ENCODE measurements at regions of chr16 and their contacts with region 1.

Region 1: GRCh38 chr16:53054670-53055485 is at the start of gene CHD9:
- DNase-seq: peak; percentile 82 to 87
- H3K4me3 ChIP-seq: peak within 1 kb of the TSS; percentile 63 to 71
- H3K27ac ChIP-seq: peak within 1 kb of the TSS; percentile 70 to 81
- H3K4me1 ChIP-seq: no peaks in the 10 kb centered on the region
- H3K27me3 ChIP-seq: no peaks in the 10 kb centered on the region
- CTCF ChIP-seq: peak; percentile 97 to 100 (median 99)
- POLR2A ChIP-seq: peak in 1 of 2 donors; percentile 45
- total RNA-seq, gene CHD9: 46.9 to 174 (median 133) TPM

Region 2: GRCh38 chr16:53130159-53131049 is 75.5 kb after region 1 on chr16:
- intact Hi-C with region 1: loop called (anchors 10 kb)
- DNase-seq: peak; percentile 95 to 96
- H3K4me3 ChIP-seq: peak overlapping the region; percentile 80 to 97
- H3K27ac ChIP-seq: peak overlapping the region; percentile 91 to 97
- H3K4me1 ChIP-seq: peaks cover 0 to 12% of the 10 kb centered on the region in 2 donors
- H3K27me3 ChIP-seq: no peaks in the 10 kb centered on the region
- CTCF ChIP-seq: peak; percentile 32 to 96 (median 84)
- POLR2A ChIP-seq: peak in 1 of 2 donors; percentile 58

Region 3: DNA sequence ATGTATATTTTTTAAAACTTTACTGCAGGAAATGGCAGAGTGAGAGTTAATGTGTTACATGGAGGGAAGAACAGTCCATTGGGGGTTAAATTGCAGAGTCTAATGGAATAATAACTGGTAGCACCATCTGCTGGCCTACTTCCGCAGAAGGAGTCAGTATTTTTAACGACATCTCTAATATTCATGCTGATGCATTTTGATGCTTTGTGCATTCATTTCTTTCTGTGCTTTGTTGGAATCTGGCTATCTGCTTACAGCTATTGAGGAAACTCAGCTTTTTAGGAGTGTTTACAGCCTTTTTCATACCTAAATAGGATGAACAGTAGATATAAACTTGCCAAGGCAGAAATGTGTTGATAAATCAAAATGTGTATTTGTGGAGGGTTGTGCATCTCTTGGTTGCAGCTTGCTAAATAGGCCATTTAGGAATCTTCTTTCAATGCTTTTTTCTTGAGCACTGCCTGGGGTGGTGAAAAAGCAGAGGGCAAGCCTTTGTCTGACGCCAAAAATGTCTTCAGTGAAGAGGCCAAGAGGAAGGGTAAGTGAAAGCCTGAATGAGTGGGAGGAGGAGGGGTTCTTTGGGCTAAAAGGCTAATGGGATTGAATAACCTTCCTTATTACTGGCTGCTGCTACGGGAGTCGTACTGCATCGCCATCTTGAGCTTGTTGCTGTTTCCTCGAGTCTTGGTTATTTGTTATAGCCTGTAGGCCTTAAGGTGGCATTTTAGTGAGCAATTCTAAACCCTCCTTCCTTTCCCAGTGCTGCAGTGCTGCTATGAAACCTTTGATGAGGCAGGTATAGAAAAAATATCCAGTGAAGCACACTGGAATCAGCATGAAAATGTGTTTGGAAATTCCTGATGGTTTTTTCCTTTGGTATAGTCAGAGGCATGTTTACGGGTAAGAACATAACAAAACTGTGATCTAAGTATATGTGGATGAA is 153.2 kb after region 1 on chr16:
- intact Hi-C with region 1: loop called (anchors 5 kb)
- DNase-seq: peak in 1 of 2 donors; percentile 41
- H3K4me3 ChIP-seq: peak overlapping the region; percentile 23 to 44
- H3K27ac ChIP-seq: peak overlapping the region; percentile 82 to 88
- H3K4me1 ChIP-seq: peaks cover 0 to 9% of the 10 kb centered on the region in 2 donors
- H3K27me3 ChIP-seq: no peaks in the 10 kb centered on the region
- CTCF ChIP-seq: peak; percentile 37 to 61 (median 52)
- POLR2A ChIP-seq: peak in 1 of 2 donors; percentile 1